Endothelial cell of umbilical vein (primary cell): ENCODE measurements at regions of chr5 and their contacts with region 1.

Region 1: DNA sequence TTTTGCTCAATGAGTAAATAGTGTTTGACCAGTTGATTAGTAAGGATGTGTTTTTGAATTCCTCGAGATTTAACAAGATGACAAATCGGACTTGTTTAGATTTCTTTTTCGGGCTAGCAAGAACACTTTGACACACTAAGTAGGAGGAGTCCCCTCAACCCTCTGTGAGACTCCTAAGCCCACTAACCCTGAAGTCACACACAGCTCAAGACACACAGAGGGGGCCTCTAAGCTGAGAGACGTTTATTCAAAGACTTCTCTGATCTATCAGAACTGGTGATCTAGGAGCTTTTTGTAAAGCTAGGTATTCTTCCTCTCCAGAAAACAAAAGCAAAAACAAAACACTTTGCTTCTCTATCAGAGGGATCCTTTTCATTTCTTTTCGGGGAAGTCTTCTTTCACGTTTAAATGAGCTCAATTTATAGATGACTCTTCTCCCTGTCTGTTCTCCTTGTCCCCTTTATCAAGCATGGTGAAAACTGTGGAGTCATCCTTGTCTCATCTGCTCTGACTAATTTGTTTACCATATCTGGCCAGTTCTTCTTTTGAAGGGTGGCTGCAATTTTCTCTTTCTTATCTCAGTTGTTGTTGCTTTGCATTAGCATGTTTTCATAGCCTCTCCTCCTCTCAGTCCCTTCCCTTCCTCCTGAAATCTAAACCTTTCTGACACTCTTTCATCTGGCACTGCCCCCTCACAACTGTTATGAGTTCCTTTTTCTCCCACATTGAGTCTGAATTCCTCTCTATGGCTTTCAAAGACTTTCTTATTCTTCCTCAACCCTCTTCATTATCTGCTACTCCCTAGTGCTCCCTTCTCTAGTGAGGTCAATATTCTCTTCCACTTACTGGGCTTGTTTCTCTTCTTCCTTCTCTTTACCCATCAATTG is 68.5 kb upstream of the RAI14 start:
- DNase-seq: peak; percentile 70
- H3K4me3 ChIP-seq: no peak overlapping the region
- H3K27ac ChIP-seq: peak overlapping the region; percentile 99
- H3K4me1 ChIP-seq: peaks cover 60% of the 10 kb centered on the region
- H3K27me3 ChIP-seq: no peaks in the 10 kb centered on the region
- CTCF ChIP-seq: no peak
- POLR2A ChIP-seq: no peak

Region 2: DNA sequence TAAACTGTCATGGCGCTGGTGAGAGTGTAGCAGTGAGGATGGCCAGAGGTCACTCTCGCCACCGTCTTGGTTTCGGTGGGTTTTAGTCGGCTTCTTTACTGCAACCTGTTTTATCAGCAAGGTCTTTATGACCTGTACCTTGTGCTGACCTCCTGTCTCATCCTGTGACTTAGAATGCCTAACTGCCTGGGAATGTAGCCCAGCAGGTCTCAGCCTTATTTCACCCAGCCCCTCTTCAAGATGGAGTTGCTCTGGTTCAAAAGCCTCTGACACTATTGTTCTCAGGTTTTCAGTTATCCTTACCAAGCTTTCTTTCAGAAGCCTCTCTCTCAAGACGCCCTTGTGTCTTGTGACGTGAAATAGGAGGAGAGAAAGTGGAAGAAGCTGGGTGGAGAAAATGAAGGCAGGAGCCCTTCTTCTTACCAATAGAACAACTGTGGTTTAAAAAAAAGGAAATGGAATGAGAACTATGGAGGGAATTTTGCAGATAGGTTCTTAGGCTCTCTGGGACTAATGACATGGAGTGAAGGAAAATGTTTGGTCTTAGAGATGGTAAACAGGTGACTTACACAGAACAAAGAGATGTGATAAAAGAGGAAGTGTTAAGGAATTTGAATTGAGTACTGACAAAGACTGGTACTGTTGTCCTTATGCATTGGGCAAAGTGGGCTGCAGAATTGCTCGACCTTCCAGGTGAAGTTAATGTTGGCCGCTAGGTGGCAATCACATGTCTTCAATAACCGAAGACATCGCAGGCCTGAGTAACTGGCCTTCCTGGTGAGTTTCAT is 64.8 kb before region 1 on chr5:
- CTCF ChIA-PET with region 1: interaction called, 19 read pairs
- POLR2A ChIA-PET with region 1: interaction called, 3 read pairs
- dilution Hi-C with region 1: no loop called
- intact Hi-C with region 1: loop called (anchors 1 kb)
- DNase-seq: no peak
- H3K4me3 ChIP-seq: no peak overlapping the region
- H3K27ac ChIP-seq: peak overlapping the region; percentile 84
- H3K4me1 ChIP-seq: peaks cover 42% of the 10 kb centered on the region
- H3K27me3 ChIP-seq: no peaks in the 10 kb centered on the region
- CTCF ChIP-seq: peak; percentile 65
- POLR2A ChIP-seq: no peak

Region 3: GRCh38 chr5:34570721-34571676 is 16.6 kb before region 1 on chr5:
- CTCF ChIA-PET with region 1: interaction called, 12 read pairs
- POLR2A ChIA-PET with region 1: interaction called, 3 read pairs
- dilution Hi-C with region 1: no loop called
- intact Hi-C with region 1: no loop called
- DNase-seq: peak; percentile 73
- H3K4me3 ChIP-seq: no peak overlapping the region
- H3K27ac ChIP-seq: peak overlapping the region; percentile 68
- H3K4me1 ChIP-seq: peaks cover 13% of the 10 kb centered on the region
- H3K27me3 ChIP-seq: no peaks in the 10 kb centered on the region
- CTCF ChIP-seq: no peak
- POLR2A ChIP-seq: no peak

Region 4: GRCh38 chr5:34608859-34609648 is 21.5 kb after region 1 on chr5:
- CTCF ChIA-PET with region 1: interaction called, 10 read pairs
- POLR2A ChIA-PET with region 1: interaction called, 4 read pairs
- dilution Hi-C with region 1: no loop called
- intact Hi-C with region 1: loop called (anchors 1 kb)
- DNase-seq: peak; percentile 95
- H3K4me3 ChIP-seq: peak overlapping the region in 1 of 3 experiments; percentile 25
- H3K27ac ChIP-seq: peak overlapping the region; percentile 99
- H3K4me1 ChIP-seq: peaks cover 31% of the 10 kb centered on the region
- H3K27me3 ChIP-seq: no peaks in the 10 kb centered on the region
- CTCF ChIP-seq: no peak
- POLR2A ChIP-seq: no peak

Region 5: GRCh38 chr5:34639852-34640605 is 52.4 kb after region 1 on chr5:
- CTCF ChIA-PET with region 1: no interaction called
- POLR2A ChIA-PET with region 1: no interaction called
- dilution Hi-C with region 1: no loop called
- intact Hi-C with region 1: no loop called
- DNase-seq: no peak
- H3K4me3 ChIP-seq: no peak overlapping the region
- H3K27ac ChIP-seq: no peak overlapping the region
- H3K4me1 ChIP-seq: no peaks in the 10 kb centered on the region
- H3K27me3 ChIP-seq: no peaks in the 10 kb centered on the region
- CTCF ChIP-seq: no peak
- POLR2A ChIP-seq: no peak

Region 6: DNA sequence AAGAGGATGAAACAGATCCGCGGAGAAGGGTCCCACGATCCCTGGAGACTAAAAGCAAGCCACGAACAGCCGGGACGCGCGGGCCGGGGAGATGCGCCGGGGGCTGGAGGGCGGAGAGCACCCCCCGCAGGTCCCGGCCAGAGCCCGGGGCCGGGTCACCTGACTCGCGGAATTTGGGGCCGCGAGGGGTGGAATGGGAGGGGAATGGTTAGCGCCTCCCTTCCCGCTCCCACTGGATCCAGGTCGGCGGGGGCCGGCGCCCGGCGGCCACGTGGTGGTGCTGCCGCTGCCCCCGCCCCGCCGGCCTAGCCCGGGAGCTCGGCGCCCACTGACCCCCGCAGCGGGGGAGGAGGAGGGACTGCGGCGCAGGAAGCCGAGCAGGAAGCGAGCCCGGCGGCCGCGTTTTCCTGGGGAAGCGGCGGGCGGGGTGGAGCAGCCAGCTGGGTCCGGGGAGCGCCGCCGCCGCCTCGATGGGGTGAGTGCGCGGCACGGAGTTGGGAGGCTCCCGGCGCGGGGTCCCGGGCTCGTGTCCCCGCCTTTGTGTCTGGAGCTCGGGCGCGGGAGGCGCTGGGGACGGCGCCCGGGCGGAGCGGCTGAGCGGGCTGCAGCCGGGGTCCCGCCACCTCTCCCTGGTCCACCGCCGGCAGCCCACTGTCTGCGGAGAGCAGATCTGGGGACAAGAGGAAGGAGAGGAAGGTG is 68.6 kb after region 1 on chr5 and contains the start of gene RAI14:
- CTCF ChIA-PET with region 1: interaction called, 26 read pairs
- POLR2A ChIA-PET with region 1: interaction called, 57 read pairs
- dilution Hi-C with region 1: no loop called
- intact Hi-C with region 1: loop called (anchors 1 kb)
- DNase-seq: peak; percentile 93
- H3K4me3 ChIP-seq: peak within 1 kb of the TSS; percentile 96 to 99 (median 98)
- H3K27ac ChIP-seq: peak within 1 kb of the TSS; percentile 96
- H3K4me1 ChIP-seq: peaks cover 53% of the 10 kb centered on the region
- H3K27me3 ChIP-seq: no peaks in the 10 kb centered on the region
- CTCF ChIP-seq: peak; percentile 8 to 24
- POLR2A ChIP-seq: peak; percentile 87
- total RNA-seq, gene RAI14: 369 and 390 TPM in 2 replicates

Region 7: GRCh38 chr5:34686762-34687268 is 99.2 kb after region 1 on chr5:
- CTCF ChIA-PET with region 1: no interaction called
- POLR2A ChIA-PET with region 1: interaction called, 6 read pairs
- dilution Hi-C with region 1: no loop called
- intact Hi-C with region 1: loop called (anchors 1 kb)
- DNase-seq: peak; percentile 97
- H3K4me3 ChIP-seq: peak overlapping the region in 1 of 3 experiments; percentile 12
- H3K27ac ChIP-seq: peak overlapping the region; percentile 80
- H3K4me1 ChIP-seq: peaks cover 63% of the 10 kb centered on the region
- H3K27me3 ChIP-seq: no peaks in the 10 kb centered on the region
- CTCF ChIP-seq: peak in 1 of 2 donors; percentile 6
- POLR2A ChIP-seq: no peak

Region 8: GRCh38 chr5:34789021-34789531 is 201.5 kb after region 1 on chr5:
- CTCF ChIA-PET with region 1: no interaction called
- POLR2A ChIA-PET with region 1: no interaction called
- dilution Hi-C with region 1: no loop called
- intact Hi-C with region 1: loop called (anchors 5 kb)
- DNase-seq: peak; percentile 95
- H3K4me3 ChIP-seq: no peak overlapping the region
- H3K27ac ChIP-seq: peak overlapping the region; percentile 81
- H3K4me1 ChIP-seq: peaks cover 46% of the 10 kb centered on the region
- H3K27me3 ChIP-seq: no peaks in the 10 kb centered on the region
- CTCF ChIP-seq: no peak
- POLR2A ChIP-seq: peak; percentile 84